CD4-positive, alpha-beta memory T cell (primary cell): ENCODE measurements at regions of chr18 and their contacts with region 1.

Region 1: GRCh38 chr18:2655178-2655953 is at the start of gene SMCHD1:
- DNase-seq: peak; percentile 88 to 92 (median 90)
- H3K4me3 ChIP-seq: peak within 1 kb of the TSS; percentile 66 to 98
- H3K4me3 Mint-ChIP-seq: peak within 1 kb of the TSS; percentile 89 to 99 (median 98)
- H3K27ac ChIP-seq: peak within 1 kb of the TSS; percentile 99
- H3K27ac Mint-ChIP-seq: peak within 1 kb of the TSS; percentile 93 to 99 (median 98)
- H3K4me1 ChIP-seq: peaks cover 23% of the 10 kb centered on the region
- H3K4me1 Mint-ChIP-seq: peaks cover 17 to 38% (median 27%) of the 10 kb centered on the region in 4 donors
- H3K27me3 ChIP-seq: no peaks in the 10 kb centered on the region
- H3K27me3 Mint-ChIP-seq: no peaks in the 10 kb centered on the region
- total RNA-seq, gene SMCHD1: 268 to 288 TPM

Region 2: GRCh38 chr18:2571200-2572143 is 83.9 kb before region 1 on chr18 and contains the starts of genes METTL4 and NDC80:
- CTCF ChIA-PET with region 1: interaction called, 28 read pairs
- POLR2A ChIA-PET with region 1: interaction called, 261 read pairs
- intact Hi-C with region 1: loop called (anchors 1 kb)
- DNase-seq: peak; percentile 84 to 91 (median 85)
- H3K4me3 ChIP-seq: peak within 1 kb of the TSS; percentile 80 to 88
- H3K4me3 Mint-ChIP-seq: peak within 1 kb of the TSS; percentile 99 to 100 (median 100)
- H3K27ac ChIP-seq: peak within 1 kb of the TSS; percentile 99
- H3K27ac Mint-ChIP-seq: peak within 1 kb of the TSS; percentile 99 to 100 (median 100)
- H3K4me1 ChIP-seq: peaks cover 44% of the 10 kb centered on the region
- H3K4me1 Mint-ChIP-seq: peaks cover 42 to 74% (median 56%) of the 10 kb centered on the region in 4 donors
- H3K27me3 ChIP-seq: no peaks in the 10 kb centered on the region
- H3K27me3 Mint-ChIP-seq: no peaks in the 10 kb centered on the region
- total RNA-seq, gene METTL4: 25.8 to 29.3 TPM
- total RNA-seq, gene NDC80: 3.8 to 6.2 TPM

Region 3: DNA sequence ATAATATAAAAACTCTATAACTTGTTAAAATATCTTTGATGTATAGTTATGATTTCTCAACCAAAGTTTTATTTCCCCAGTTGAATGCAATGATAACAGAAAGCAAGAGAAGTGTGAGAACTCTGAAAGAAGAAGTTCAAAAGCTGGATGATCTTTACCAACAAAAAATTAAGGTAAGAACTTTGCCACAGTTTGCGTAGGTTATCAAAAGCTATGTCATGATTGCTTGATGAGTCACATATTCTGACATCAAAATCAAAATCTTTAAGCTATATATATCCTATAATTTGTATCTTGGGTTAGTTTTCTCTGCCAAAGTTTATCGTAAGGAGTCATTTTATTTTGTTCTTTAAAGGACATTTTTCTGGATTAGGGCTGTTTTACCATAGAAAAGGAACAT is 49.0 kb before region 1 on chr18:
- CTCF ChIA-PET with region 1: interaction called, 9 read pairs
- POLR2A ChIA-PET with region 1: interaction called, 148 read pairs
- intact Hi-C with region 1: loop called (anchors 1 kb)
- DNase-seq: peak in 4 of 5 donors; percentile 41 to 54 (median 46)
- H3K4me3 ChIP-seq: peak overlapping the region in 1 of 2 donors; percentile 8
- H3K4me3 Mint-ChIP-seq: peak overlapping the region; percentile 52 to 89 (median 66)
- H3K27ac ChIP-seq: peak overlapping the region; percentile 55
- H3K27ac Mint-ChIP-seq: peak overlapping the region; percentile 76 to 97 (median 93)
- H3K4me1 ChIP-seq: peaks cover 59% of the 10 kb centered on the region
- H3K4me1 Mint-ChIP-seq: peaks cover 35 to 52% (median 44%) of the 10 kb centered on the region in 4 donors
- H3K27me3 ChIP-seq: no peaks in the 10 kb centered on the region
- H3K27me3 Mint-ChIP-seq: no peaks in the 10 kb centered on the region

Region 4: GRCh38 chr18:2641638-2642037 is 13.7 kb before region 1 on chr18:
- CTCF ChIA-PET with region 1: interaction called, 75 read pairs
- POLR2A ChIA-PET with region 1: interaction called, 698 read pairs
- intact Hi-C with region 1: loop called (anchors 1 kb)
- DNase-seq: peak in 4 of 5 donors; percentile 52 to 67 (median 59)
- H3K4me3 ChIP-seq: peak overlapping the region in 1 of 2 donors; percentile 8
- H3K4me3 Mint-ChIP-seq: peak overlapping the region; percentile 73 to 89 (median 84)
- H3K27ac ChIP-seq: peak overlapping the region; percentile 73
- H3K27ac Mint-ChIP-seq: peak overlapping the region in 3 of 7 donors; percentile 96 to 97 (median 96)
- H3K4me1 ChIP-seq: peaks cover 86% of the 10 kb centered on the region
- H3K4me1 Mint-ChIP-seq: peaks cover 32 to 55% (median 45%) of the 10 kb centered on the region in 4 donors
- H3K27me3 ChIP-seq: no peaks in the 10 kb centered on the region
- H3K27me3 Mint-ChIP-seq: peaks cover 0 to 2% of the 10 kb centered on the region in 2 donors

Region 5: DNA sequence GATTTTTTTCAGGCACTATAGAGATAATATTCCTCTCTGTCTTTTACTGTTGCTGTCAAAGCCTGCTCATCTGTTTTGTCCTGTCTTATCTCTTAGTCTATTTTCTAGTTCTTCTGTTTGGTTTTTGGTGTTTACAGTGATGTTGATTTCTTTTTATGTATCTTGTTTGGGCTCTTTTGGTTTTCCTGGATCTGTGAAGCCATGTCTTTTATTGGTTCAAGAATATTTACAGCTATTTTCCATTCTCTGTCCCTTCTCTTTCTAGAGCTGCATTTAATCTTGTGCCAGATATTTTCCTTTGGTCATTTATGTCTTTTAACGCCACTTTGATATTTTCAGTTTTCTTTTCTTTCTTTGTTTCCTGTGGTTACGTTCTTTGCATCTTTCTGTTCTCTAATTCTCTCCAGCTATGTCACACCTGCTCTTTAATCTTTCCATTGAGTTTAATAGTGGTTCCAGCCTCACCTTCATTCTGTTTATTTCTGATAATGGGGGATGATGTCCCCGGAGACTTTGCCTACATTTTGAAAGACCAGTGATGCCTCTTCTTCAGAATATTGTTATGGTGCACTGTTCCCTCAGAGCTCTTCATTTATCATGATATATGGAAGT is 32.1 kb after region 1 on chr18:
- CTCF ChIA-PET with region 1: interaction called, 4 read pairs
- POLR2A ChIA-PET with region 1: interaction called, 59 read pairs
- intact Hi-C with region 1: no loop called
- DNase-seq: no peak
- H3K4me3 ChIP-seq: no peak overlapping the region
- H3K4me3 Mint-ChIP-seq: peak overlapping the region in 7 of 8 donors; percentile 3 to 74 (median 51)
- H3K27ac ChIP-seq: no peak overlapping the region
- H3K27ac Mint-ChIP-seq: peak overlapping the region; percentile 7 to 88 (median 40)
- H3K4me1 ChIP-seq: peaks cover 49% of the 10 kb centered on the region
- H3K4me1 Mint-ChIP-seq: peaks cover 42 to 70% (median 61%) of the 10 kb centered on the region in 4 donors
- H3K27me3 ChIP-seq: no peaks in the 10 kb centered on the region
- H3K27me3 Mint-ChIP-seq: no peaks in the 10 kb centered on the region

Region 6: DNA sequence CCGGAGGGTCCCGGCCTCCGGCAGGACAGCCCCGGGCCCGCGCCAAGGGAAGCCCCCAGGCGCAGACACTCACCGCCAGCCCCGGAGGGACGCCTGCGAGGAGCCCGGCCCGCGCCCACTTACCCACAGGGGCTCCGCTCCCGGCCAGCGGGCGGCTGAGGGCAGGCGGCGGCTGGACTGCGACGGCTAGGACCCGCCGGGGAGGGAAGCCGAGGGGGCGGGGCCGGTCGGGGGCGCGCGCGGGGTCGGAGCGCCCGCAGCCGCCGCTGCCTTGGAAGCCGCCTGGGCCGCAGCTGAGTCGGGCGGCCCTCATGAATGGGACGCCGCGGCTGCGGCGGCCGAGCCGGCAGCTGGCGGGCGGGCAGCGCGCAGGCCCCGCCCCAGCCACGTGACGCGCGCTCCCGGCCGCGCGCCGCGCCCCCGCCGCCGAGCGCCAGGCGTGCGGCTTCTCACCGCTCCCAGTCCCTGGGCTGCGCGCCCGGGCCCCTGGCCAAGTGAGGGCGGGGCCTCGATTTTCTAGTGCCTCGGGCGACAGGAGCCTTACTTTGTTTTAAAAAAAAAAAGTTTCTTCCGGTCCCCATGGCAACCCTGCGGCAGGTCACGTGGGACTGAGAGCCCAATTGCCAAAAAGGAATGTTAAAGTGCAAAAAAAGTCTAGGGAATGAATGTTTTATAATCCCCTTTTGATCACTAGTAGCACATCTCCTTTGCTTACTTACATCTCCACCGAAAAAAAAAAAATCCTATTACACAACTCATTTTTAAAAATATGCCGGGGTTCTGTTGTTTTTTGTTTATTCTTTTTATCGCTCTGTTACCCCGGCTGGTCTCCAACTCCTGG is 357.8 kb after region 1 on chr18 and contains the start of gene LPIN2:
- CTCF ChIA-PET with region 1: no interaction called
- POLR2A ChIA-PET with region 1: no interaction called
- intact Hi-C with region 1: loop called (anchors 1 kb)
- DNase-seq: peak; percentile 97 to 98 (median 98)
- H3K4me3 ChIP-seq: peak within 1 kb of the TSS; percentile 55 to 70
- H3K4me3 Mint-ChIP-seq: peak within 1 kb of the TSS; percentile 93 to 99 (median 96)
- H3K27ac ChIP-seq: peak within 1 kb of the TSS; percentile 63
- H3K27ac Mint-ChIP-seq: peak within 1 kb of the TSS; percentile 94 to 98 (median 98)
- H3K4me1 ChIP-seq: peaks cover 68% of the 10 kb centered on the region
- H3K4me1 Mint-ChIP-seq: peaks cover 51 to 75% (median 68%) of the 10 kb centered on the region in 4 donors
- H3K27me3 ChIP-seq: no peaks in the 10 kb centered on the region
- H3K27me3 Mint-ChIP-seq: no peaks in the 10 kb centered on the region
- total RNA-seq, gene LPIN2: 95.4 to 103 TPM